ENCODE measurements at regions of chr1 and their contacts with region 1.

Region 1: GRCh38 chr1:218351391-218352074 is 6.4 kb downstream of the TGFB2 start:
- DNase-seq: peak in 6 of 9 donors; percentile 16 to 33 (median 20)
- ATAC-seq: peak; percentile 81
- H3K4me3 ChIP-seq: peak overlapping the region; percentile 32
- H3K4me3 Mint-ChIP-seq: peak overlapping the region; percentile 21 to 86 (median 70)
- H3K27ac ChIP-seq: no peak overlapping the region
- H3K27ac Mint-ChIP-seq: peak overlapping the region in 4 of 9 donors; percentile 7 to 54 (median 18)
- H3K4me1 ChIP-seq: peaks cover 0 to 7% of the 10 kb centered on the region in 2 donors
- H3K4me1 Mint-ChIP-seq: peaks cover 14 to 34% (median 30%) of the 10 kb centered on the region in 7 donors
- H3K27me3 ChIP-seq: no peaks in the 10 kb centered on the region
- H3K27me3 Mint-ChIP-seq: peaks cover 9 to 34% (median 26%) of the 10 kb centered on the region in 5 donors

Region 2: DNA sequence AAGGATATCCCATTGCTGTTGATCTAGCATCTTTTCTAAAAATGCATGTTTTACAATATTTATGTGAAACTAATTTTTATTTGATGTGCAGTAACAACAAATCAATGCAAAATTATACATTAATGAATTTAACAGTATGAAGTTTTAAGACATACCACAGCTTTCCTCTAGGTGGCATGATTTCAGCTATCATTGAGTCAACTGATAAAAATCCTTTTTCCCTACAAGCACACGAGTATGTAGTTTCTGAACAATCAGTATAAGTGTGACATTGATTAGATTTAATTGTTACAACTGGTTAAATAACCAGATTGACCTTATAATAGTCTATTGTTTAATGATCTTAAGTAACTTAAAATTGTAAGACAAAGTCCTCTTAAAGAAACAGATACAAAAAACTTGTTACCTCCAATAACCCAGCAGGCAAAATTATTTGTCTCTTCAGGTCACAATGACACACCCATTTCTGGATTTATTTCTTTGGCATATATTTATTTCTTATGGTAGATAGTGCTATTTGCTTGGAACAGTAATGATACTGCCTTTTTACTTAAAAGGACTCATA is 12.2 kb before region 1 on chr1:
- CTCF ChIA-PET with region 1: no interaction called
- POLR2A ChIA-PET with region 1: no interaction called
- intact Hi-C with region 1: loop called in 1 of 2 experiments (anchors 1 kb)
- DNase-seq: no peak
- ATAC-seq: no peak
- H3K4me3 ChIP-seq: no peak overlapping the region
- H3K4me3 Mint-ChIP-seq: no peak overlapping the region
- H3K27ac ChIP-seq: no peak overlapping the region
- H3K27ac Mint-ChIP-seq: no peak overlapping the region
- H3K4me1 ChIP-seq: peaks cover 0 to 3% of the 10 kb centered on the region in 2 donors
- H3K4me1 Mint-ChIP-seq: no peaks in the 10 kb centered on the region
- H3K27me3 ChIP-seq: peaks cover 0 to 3% of the 10 kb centered on the region in 2 donors
- H3K27me3 Mint-ChIP-seq: peaks cover 0 to 16% (median 9%) of the 10 kb centered on the region in 5 donors

Region 3: GRCh38 chr1:218377143-218377660 is 25.7 kb after region 1 on chr1:
- CTCF ChIA-PET with region 1: no interaction called
- POLR2A ChIA-PET with region 1: no interaction called
- intact Hi-C with region 1: loop called in 1 of 2 experiments (anchors 2 kb)
- DNase-seq: peak in 8 of 9 donors; percentile 3 to 68 (median 8)
- ATAC-seq: peak; percentile 77
- H3K4me3 ChIP-seq: no peak overlapping the region
- H3K4me3 Mint-ChIP-seq: peak overlapping the region in 1 of 10 donors; percentile 23
- H3K27ac ChIP-seq: no peak overlapping the region
- H3K27ac Mint-ChIP-seq: no peak overlapping the region
- H3K4me1 ChIP-seq: no peaks in the 10 kb centered on the region
- H3K4me1 Mint-ChIP-seq: peaks cover 0 to 10% (median 7%) of the 10 kb centered on the region in 7 donors
- H3K27me3 ChIP-seq: no peaks in the 10 kb centered on the region
- H3K27me3 Mint-ChIP-seq: peaks cover 14 to 35% (median 28%) of the 10 kb centered on the region in 5 donors

Region 4: GRCh38 chr1:218439541-218440295 is 88.2 kb after region 1 on chr1:
- CTCF ChIA-PET with region 1: no interaction called
- POLR2A ChIA-PET with region 1: no interaction called
- intact Hi-C with region 1: no loop called
- DNase-seq: no peak
- ATAC-seq: no peak
- H3K4me3 ChIP-seq: no peak overlapping the region
- H3K4me3 Mint-ChIP-seq: no peak overlapping the region
- H3K27ac ChIP-seq: no peak overlapping the region
- H3K27ac Mint-ChIP-seq: no peak overlapping the region
- H3K4me1 ChIP-seq: no peaks in the 10 kb centered on the region
- H3K4me1 Mint-ChIP-seq: no peaks in the 10 kb centered on the region
- H3K27me3 ChIP-seq: no peaks in the 10 kb centered on the region
- H3K27me3 Mint-ChIP-seq: peaks cover 0 to 3% (median 0%) of the 10 kb centered on the region in 5 donors

Measured in naive thymus-derived CD4-positive, alpha-beta T cell (primary cell).